ENCODE measurements at regions of chr6 and their contacts with region 1.

Region 1: DNA sequence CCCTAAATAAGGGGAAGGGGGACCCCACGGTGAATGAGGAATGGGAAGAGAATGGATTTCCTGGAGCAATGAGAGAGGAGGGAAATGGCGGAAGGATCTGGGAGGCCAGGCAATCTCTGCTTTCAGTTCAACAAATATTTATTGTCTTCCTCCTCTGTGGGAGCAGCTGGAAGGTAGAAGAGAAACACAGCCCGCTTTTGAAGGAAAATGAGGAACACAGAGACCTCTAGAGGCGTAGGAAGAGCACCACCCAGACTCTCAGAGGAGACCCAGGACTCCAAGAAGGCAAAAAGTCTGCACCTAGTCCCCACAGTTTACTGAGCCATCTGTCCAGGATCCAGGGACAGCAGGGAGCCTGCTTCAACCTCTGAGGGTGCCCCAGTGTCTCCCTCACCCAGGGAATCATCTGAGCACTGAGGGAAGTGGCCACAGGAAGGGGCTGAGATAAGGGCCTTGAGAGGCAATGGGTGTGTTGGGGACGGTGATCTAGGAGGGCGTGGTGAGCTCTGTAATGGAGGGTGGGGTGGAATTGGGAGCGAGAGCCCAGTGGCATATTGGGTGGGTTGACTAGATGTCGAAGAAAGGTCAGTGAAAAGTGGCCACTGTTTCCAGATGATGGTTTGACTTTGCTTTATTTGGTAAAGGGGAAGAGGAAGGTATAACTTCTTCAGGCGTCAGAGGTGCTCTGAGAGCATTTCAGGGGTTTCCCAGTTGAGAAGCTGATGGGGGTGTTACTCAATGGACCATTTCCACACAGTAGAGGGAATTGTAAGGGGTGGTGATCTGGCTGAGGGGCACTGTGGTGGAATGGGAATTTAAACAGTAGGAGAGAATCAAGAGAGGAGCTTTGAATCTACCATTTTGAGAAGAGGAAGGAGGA is 610 bp downstream of the PSORS1C1 start:
- DNase-seq: peak; percentile 73
- H3K4me3 Mint-ChIP-seq: peak overlapping the region; percentile 58
- H3K27ac Mint-ChIP-seq: peak overlapping the region; percentile 87
- H3K4me1 Mint-ChIP-seq: peaks cover 44% of the 10 kb centered on the region
- H3K27me3 Mint-ChIP-seq: peaks cover 6% of the 10 kb centered on the region
- CTCF ChIP-seq: peak; percentile 47

Region 2: DNA sequence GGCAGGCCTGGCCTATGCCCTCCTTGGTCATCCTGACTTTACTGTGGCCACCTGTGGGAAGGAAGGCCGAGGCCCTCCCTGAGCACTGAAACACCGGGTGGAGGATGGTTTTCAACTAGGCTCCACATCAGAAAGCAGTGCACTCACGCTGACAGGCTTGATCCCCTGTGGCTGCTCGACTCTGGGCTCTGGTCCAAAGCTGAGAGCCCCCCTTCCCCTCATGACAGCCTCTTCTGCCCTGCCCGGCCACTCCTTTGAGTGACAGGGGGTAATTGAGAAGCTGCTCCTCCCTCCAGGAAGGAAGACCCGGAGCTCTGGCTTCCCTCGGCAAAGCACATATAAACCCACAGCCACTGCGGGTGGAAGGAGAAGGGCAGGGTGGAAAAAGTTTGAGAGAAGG is 61.3 kb before region 1 on chr6:
- CTCF ChIA-PET with region 1: no interaction called
- intact Hi-C with region 1: no loop called
- DNase-seq: no peak
- H3K4me3 Mint-ChIP-seq: no peak overlapping the region
- H3K27ac Mint-ChIP-seq: no peak overlapping the region
- H3K4me1 Mint-ChIP-seq: peaks cover 20% of the 10 kb centered on the region
- H3K27me3 Mint-ChIP-seq: peaks cover 15% of the 10 kb centered on the region
- CTCF ChIP-seq: no peak

Region 3: DNA sequence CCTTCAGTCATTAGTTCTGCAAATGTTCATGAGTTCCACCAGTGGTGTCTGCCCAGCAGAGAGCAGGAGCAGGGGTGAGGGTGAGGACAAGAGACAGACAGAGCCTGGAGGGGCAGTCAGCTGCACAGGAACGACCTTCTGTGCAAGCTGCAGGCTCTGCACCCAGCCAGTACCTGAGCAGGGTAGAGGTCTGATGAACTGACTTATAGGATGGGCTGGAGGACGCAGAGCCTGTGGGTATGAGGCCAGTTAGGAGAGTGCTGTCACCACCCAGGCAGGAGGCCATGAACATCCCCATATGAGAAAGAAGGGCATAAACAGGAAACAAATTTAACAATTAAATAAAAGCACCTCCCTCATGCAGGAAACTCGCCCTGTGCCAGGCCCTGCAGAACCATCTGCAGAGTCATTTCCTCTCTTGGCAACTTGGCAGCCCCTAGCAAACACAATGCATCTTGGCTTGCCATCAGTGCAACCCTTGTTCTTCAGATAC is 20.8 kb before region 1 on chr6:
- CTCF ChIA-PET with region 1: interaction called, 22 read pairs
- intact Hi-C with region 1: no loop called
- DNase-seq: peak; percentile 53
- H3K4me3 Mint-ChIP-seq: no peak overlapping the region
- H3K27ac Mint-ChIP-seq: no peak overlapping the region
- H3K4me1 Mint-ChIP-seq: peaks cover 36% of the 10 kb centered on the region
- H3K27me3 Mint-ChIP-seq: no peaks in the 10 kb centered on the region
- CTCF ChIP-seq: no peak

Region 4: DNA sequence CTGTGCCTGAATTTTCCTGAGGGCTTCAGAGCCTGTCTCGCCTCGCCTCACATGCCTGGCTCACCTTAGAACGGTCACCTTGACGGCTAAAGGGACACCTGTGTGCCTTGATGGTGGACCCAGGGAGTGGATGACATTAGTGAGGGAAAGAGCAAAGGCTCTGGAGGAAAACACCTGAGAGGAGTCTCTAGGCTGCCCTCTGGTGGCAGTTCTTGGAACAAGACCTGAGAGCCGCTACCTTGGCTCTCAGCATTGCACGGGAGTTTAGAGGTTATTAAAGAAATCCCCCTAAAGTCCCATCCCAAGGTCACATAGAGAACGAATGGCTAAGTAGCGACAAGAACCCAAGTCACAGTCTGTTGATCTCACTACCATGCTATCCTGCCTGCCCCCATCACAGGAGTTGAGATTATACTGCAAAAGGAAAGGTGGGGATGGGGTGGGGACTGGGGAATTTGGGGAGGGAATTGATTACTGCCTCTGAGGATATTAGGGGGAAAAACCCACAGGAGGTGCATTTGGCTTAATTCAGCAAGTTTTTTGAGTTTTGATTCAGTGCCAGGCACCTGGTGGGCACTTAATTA is 13.0 kb after region 1 on chr6:
- CTCF ChIA-PET with region 1: interaction called, 20 read pairs
- intact Hi-C with region 1: no loop called
- DNase-seq: peak; percentile 92
- H3K4me3 Mint-ChIP-seq: no peak overlapping the region
- H3K27ac Mint-ChIP-seq: peak overlapping the region; percentile 45
- H3K4me1 Mint-ChIP-seq: peaks cover 50% of the 10 kb centered on the region
- H3K27me3 Mint-ChIP-seq: no peaks in the 10 kb centered on the region
- CTCF ChIP-seq: peak; percentile 99

Measured in Calu3 (cell line).